GM23248 (cell line): ENCODE measurements at regions of chr5 and their contacts with region 1.

Region 1: GRCh38 chr5:181024245-181025064 is 15.6 kb upstream of the BTNL9 start:
- DNase-seq: no peak
- H3K4me3 ChIP-seq: no peak overlapping the region
- H3K27ac ChIP-seq: no peak overlapping the region
- H3K4me1 ChIP-seq: no peaks in the 10 kb centered on the region
- H3K27me3 ChIP-seq: no peaks in the 10 kb centered on the region

Region 2: GRCh38 chr5:180885872-180886418 is 138.5 kb before region 1 on chr5:
- in situ Hi-C with region 1: loop called (anchors 25 kb)
- DNase-seq: no peak
- H3K4me3 ChIP-seq: no peak overlapping the region
- H3K27ac ChIP-seq: no peak overlapping the region
- H3K4me1 ChIP-seq: no peaks in the 10 kb centered on the region
- H3K27me3 ChIP-seq: no peaks in the 10 kb centered on the region

Region 3: DNA sequence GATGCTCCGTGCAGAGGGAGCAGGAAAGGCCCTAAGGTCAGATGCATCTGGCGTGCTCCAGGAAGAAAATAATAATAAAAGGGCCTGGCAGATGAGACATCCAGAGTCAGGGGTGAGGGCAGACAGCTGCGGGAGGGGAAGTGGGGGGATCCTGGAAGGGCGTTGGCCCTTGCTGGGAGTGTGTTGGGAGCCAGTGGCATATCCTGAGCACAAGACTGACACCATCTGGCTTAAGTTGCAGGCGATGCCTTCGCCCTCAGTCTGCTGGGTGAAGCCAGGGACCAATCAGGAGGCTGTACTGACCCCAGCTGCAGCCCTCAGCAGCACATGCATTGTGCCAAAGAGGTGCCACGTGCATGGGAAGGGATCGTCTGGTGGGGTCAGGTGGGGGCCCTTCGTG is 126.7 kb after region 1 on chr5:
- in situ Hi-C with region 1: no loop called
- DNase-seq: peak; percentile 18
- H3K4me3 ChIP-seq: no peak overlapping the region
- H3K27ac ChIP-seq: no peak overlapping the region
- H3K4me1 ChIP-seq: no peaks in the 10 kb centered on the region
- H3K27me3 ChIP-seq: peaks cover 10% of the 10 kb centered on the region